GM10248 (cell line): ENCODE measurements at regions of chr11 and their contacts with region 1.

Region 1: DNA sequence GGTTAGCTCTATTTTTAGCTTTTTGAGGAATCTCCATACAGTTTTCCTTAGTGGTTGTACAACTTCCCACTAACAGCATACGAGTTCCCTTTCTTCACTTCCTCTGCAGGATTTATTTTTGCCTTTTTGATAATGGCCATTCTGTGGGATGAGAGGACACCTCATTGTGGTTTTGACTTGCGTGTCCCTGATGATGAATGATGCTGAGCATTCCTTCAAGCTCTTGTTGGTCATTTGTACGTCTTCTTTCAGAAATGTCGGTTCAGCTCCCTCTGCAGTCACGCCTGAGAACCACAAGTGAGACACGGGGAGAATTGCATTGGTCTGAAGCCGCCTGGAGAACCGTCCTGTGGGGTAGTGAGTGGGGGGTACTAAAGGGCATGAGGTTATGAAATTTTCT is 2.0 kb upstream of the KRTAP5-10 start:
- DNase-seq: peak; percentile 72
- CTCF ChIP-seq: peak; percentile 73

Region 2: DNA sequence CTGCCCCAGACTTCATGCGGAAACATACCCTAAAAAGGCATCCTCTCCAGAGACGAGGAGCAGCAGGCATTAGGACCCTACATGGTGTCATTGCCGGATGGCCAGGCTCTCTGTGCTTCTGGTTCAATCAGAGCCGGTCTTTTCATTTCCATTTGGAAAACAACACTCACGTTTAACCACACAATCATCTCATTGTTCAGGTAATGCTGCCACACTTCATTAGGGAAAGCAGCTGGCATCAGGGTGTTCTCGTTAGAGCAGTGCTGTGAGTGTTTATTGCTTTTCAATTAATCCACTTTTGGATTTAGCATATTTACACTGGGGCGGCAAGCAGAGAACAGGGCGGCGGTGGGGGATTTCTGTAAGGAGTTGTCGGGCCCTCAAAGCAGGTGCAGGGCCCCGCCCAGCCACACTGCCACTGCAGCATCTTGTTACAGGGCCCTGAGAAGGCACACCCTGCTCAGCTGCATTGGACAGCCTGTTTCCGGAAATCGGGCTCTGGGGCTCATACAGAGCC is 649.6 kb before region 1 on chr11:
- CTCF ChIA-PET with region 1: no interaction called
- POLR2A ChIA-PET with region 1: no interaction called
- DNase-seq: no peak
- CTCF ChIP-seq: no peak

Region 3: GRCh38 chr11:71500601-71501021 is 62.8 kb before region 1 on chr11:
- CTCF ChIA-PET with region 1: no interaction called
- POLR2A ChIA-PET with region 1: no interaction called
- DNase-seq: no peak
- CTCF ChIP-seq: no peak

Region 4: DNA sequence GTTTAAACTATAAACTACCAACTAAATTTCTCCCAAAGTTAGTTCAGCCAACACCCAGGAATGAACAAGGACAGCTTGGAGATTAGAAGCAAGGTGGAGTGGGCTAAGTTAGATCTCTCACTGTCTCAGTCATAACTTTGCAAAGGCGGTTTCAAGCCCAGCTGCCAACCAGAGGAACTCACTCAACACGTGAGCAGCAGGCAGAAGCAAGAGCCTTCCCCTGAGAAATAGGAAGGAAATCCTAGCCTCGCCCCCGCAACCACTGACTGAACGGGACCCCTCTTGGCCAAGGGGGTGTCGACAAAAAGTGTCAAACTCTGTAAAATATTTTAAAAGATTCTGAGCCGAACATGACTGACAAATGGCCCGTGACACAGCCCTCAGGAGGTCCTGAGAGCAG is 19.5 kb before region 1 on chr11:
- CTCF ChIA-PET with region 1: interaction called, 18 read pairs
- POLR2A ChIA-PET with region 1: no interaction called
- DNase-seq: no peak
- CTCF ChIP-seq: no peak